GM12878 (cell line): ENCODE measurements at regions of chr3 and their contacts with region 1.

Region 1: DNA sequence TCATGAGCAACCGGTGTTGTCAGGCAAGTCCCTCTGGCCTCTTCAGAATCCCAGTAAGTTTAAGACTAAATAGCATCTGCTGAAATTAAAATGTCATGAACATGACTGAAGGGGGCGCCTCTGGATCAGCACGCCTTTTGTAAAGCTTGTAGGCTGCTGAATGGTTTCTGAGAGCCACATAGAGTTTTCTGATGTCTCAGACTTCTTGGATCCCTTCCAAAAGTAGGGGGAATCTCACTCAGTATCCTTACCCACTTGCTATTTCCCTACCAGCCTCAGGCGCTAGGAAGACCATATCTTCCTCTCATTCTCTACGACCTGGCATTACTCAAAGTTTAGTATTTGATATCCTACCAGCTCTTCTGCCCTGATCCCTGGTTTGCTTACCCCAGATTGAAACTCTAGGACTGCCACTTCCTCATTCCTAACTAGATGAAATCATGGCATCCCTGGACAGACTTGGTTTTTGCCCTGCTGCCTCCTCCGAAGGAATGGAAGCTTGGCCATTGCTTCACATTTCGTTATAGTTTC is 62.7 kb upstream of the CD47 start:
- DNase-seq: no peak
- ATAC-seq: peak; percentile 91
- H3K4me3 ChIP-seq: no peak overlapping the region
- H3K27ac ChIP-seq: no peak overlapping the region
- H3K4me1 ChIP-seq: no peaks in the 10 kb centered on the region
- H3K27me3 ChIP-seq: no peaks in the 10 kb centered on the region
- CTCF ChIP-seq: peak; percentile 45 to 68 (median 59); a peak in 5 of 6 replicates
- EP300 ChIP-seq: no peak
- POLR2A ChIP-seq: no peak
- RAD21 ChIP-seq: peak; percentile 92

Region 2: GRCh38 chr3:107884719-107885460 is 268.6 kb before region 1 on chr3:
- CTCF ChIA-PET with region 1: no interaction called
- POLR2A ChIA-PET with region 1: no interaction called
- RAD21 ChIA-PET with region 1: no interaction called
- SMC1A ChIA-PET with region 1: no interaction called
- in situ Hi-C with region 1: no loop called
- intact Hi-C with region 1: no loop called
- DNase-seq: no peak
- ATAC-seq: no peak
- H3K4me3 ChIP-seq: no peak overlapping the region
- H3K27ac ChIP-seq: no peak overlapping the region
- H3K4me1 ChIP-seq: no peaks in the 10 kb centered on the region
- H3K27me3 ChIP-seq: no peaks in the 10 kb centered on the region
- CTCF ChIP-seq: no peak
- EP300 ChIP-seq: no peak
- POLR2A ChIP-seq: no peak
- RAD21 ChIP-seq: no peak

Region 3: GRCh38 chr3:108044699-108045098 is 108.8 kb before region 1 on chr3:
- CTCF ChIA-PET with region 1: interaction called, 10 read pairs
- POLR2A ChIA-PET with region 1: no interaction called
- RAD21 ChIA-PET with region 1: no interaction called
- SMC1A ChIA-PET with region 1: interaction called, 3 read pairs
- in situ Hi-C with region 1: no loop called
- intact Hi-C with region 1: no loop called
- DNase-seq: no peak
- ATAC-seq: no peak
- H3K4me3 ChIP-seq: no peak overlapping the region
- H3K27ac ChIP-seq: no peak overlapping the region
- H3K4me1 ChIP-seq: no peaks in the 10 kb centered on the region
- H3K27me3 ChIP-seq: no peaks in the 10 kb centered on the region
- CTCF ChIP-seq: no peak; a peak in 1 of 6 replicates
- EP300 ChIP-seq: no peak
- POLR2A ChIP-seq: no peak
- RAD21 ChIP-seq: no peak

Region 4: DNA sequence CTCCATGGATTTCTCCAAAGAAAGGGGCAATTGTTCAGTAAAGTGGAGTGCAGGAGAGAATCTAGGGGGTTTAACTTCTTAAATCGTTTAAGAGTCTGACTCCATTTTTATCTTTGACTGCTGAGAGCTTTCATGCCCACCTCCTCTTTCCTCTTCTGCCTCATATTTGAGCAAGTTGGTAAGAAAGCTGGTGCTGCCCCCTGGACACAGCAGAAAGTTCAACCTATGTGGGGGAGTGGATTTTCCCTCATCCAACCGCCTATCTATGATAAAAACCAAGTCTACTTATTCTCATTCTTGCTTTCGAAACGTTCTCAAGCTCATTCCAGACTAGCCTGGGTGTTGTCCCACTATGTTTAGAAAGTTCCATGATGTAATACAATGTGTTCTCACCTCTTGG is 168.8 kb after region 1 on chr3:
- CTCF ChIA-PET with region 1: interaction called, 13 read pairs
- POLR2A ChIA-PET with region 1: no interaction called
- RAD21 ChIA-PET with region 1: interaction called, 8 read pairs
- SMC1A ChIA-PET with region 1: interaction called, 8 read pairs
- in situ Hi-C with region 1: no loop called
- intact Hi-C with region 1: no loop called
- DNase-seq: no peak
- ATAC-seq: peak; percentile 35; the same call in 2 of the 3 replicates
- H3K4me3 ChIP-seq: no peak overlapping the region
- H3K27ac ChIP-seq: no peak overlapping the region
- H3K4me1 ChIP-seq: no peaks in the 10 kb centered on the region
- H3K27me3 ChIP-seq: no peaks in the 10 kb centered on the region
- CTCF ChIP-seq: peak in 1 of 3 experiments; percentile 27; a peak in 2 of 6 replicates
- EP300 ChIP-seq: no peak
- POLR2A ChIP-seq: no peak
- RAD21 ChIP-seq: peak; percentile 56

Region 5: DNA sequence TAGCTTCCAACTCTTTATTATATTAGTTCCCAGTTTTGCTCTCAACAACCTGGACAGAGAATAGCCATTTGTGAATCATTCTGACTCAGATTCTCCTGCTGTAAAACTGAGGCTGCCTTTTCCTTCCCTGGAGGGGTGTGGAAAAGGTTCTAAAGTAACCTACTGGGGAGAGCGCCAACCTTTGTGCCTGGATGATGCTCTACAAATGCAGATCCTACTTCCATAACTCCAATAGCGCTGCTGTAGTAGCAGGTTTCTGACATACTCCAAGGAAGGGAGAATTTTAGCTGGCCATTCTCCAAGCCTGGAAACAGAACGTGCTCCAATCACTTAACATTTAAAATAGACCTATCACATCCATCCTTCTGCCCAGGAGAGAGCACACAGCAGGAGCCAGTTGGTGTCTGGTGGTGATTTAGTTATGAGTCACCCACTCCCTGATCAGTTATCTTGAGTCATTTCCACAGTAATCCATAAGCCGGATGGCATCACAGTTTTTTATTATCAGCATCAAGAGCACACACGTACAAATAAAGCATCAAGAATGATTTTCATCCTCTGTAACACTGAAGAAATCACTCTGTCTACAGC is 318.6 kb after region 1 on chr3:
- CTCF ChIA-PET with region 1: interaction called, 39 read pairs
- POLR2A ChIA-PET with region 1: no interaction called
- RAD21 ChIA-PET with region 1: interaction called, 14 read pairs
- SMC1A ChIA-PET with region 1: interaction called, 27 read pairs
- in situ Hi-C with region 1: loop called (anchors 5 kb)
- intact Hi-C with region 1: loop called (anchors 1 kb)
- DNase-seq: no peak
- ATAC-seq: no peak
- H3K4me3 ChIP-seq: no peak overlapping the region
- H3K27ac ChIP-seq: no peak overlapping the region
- H3K4me1 ChIP-seq: no peaks in the 10 kb centered on the region
- H3K27me3 ChIP-seq: no peaks in the 10 kb centered on the region; a peak in 1 of 4 replicates
- CTCF ChIP-seq: no peak
- EP300 ChIP-seq: no peak
- POLR2A ChIP-seq: no peak
- RAD21 ChIP-seq: no peak